Mucosa of descending colon (tissue), 3 donors: ENCODE measurements at regions of chr1 and their contacts with region 1.

Region 1: DNA sequence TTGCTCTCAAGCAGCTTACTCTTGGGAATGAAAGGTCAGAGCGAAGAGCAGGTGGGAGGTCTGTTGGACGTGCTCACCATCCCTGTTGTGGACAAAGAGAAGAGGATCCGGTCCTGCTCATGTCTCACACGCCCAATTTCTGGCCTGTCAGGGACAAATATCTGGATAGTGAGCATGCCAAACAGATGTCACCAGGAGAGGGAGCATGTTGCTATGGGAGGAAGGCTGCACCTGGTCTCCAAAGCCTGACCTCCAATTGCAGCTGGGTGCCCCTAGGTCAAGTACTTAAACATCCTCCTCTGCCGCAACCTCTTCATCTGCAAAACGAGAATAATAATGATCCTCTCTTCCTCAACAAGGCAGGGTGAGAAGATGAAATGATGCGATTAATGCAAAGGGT is 53.4 kb downstream of the DMRTA2 start:
- DNase-seq: peak in 1 of 3 donors; percentile 6
- ATAC-seq: no peak
- H3K4me3 ChIP-seq: no peak overlapping the region
- H3K4me1 ChIP-seq: no peaks in the 10 kb centered on the region
- CTCF ChIP-seq: no peak

Region 2: DNA sequence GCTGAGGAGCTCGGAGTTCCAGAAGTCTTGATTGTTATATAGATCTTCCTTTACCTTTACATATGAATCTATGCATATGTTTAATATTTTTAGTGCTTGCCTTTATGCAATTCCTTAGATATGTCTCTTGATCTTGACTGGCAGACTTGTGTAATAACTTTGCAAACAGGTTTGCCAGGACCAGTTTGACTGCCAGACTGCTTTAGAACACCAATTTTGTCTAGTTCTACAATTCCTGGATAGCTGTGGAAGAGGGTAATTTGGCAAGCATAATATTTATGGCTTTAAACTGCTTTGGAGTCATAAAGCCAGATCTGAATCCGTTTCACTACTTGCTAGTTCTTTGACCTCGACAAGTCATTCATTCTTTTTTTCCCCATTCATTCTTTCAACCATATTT is 340.3 kb after region 1 on chr1:
- intact Hi-C with region 1: loop called in 1 of 2 experiments (anchors 10 kb)
- DNase-seq: peak in 1 of 3 donors; percentile 38
- ATAC-seq: peak; percentile 71
- H3K4me3 ChIP-seq: no peak overlapping the region
- H3K4me1 ChIP-seq: peaks cover 5% of the 10 kb centered on the region
- CTCF ChIP-seq: no peak

Region 3: GRCh38 chr1:51341876-51342496 is 972.2 kb after region 1 on chr1:
- intact Hi-C with region 1: no loop called
- DNase-seq: no peak
- ATAC-seq: no peak
- H3K4me3 ChIP-seq: no peak overlapping the region
- H3K4me1 ChIP-seq: peaks cover 3% of the 10 kb centered on the region
- CTCF ChIP-seq: no peak